Gastrocnemius medialis (tissue), 4 donors: ENCODE measurements at regions of chr1 and their contacts with region 1.

Region 1: DNA sequence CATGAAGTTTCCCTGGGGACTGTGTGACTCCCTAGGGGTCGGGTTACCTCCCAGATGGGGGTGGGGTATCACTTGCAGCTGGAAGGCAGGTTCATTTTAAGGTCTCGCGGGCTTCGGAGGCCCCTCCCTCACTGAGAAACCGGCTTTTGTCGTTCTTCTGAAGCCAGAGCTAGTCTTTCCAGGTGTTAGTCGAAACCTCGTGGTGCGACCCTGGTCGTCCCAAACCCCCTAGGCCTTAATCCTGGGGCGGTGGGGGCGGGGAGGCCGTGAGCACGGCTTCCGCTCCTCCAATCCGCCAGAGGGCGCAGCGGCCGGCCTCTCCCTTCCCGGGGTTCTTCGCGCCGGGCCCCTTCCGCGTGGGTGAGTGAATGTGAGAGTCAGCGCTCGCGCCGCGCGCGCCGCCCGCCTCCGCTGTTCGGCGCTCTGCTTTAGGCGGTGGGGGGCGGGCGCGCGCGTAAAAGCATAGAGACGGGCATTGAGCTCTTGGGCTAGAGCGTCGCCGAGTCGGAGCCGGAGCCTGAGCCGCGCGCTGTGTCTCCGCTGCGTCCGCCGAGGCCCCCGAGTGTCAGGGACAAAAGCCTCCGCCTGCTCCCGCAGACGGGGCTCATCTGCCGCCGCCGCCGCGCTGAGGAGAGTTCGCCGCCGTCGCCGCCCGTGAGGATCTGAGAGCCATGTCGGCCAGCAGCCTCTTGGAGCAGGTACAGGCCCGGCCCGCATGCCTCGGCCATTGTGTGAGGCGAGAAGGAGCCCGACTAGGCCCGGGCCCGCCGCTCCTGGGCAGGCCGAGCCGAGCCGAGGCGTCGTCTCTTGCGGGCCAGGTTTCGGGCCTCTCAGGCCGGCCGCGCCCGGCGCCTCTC is at the start of gene YTHDF2:
- DNase-seq: peak; percentile 92 to 96
- ATAC-seq: peak; percentile 91 to 95
- H3K4me3 ChIP-seq: peak within 1 kb of the TSS; percentile 82 to 94 (median 90)
- H3K27ac ChIP-seq: peak within 1 kb of the TSS; percentile 90 to 97 (median 96)
- H3K4me1 ChIP-seq: peaks cover 35 to 42% of the 10 kb centered on the region in 2 donors
- H3K27me3 ChIP-seq: no peaks in the 10 kb centered on the region
- CTCF ChIP-seq: peak; percentile 95 to 97 (median 96)
- POLR2A ChIP-seq: peak; percentile 94 to 95
- total RNA-seq, gene YTHDF2: 35.6 to 50.6 (median 47.0) TPM

Region 2: DNA sequence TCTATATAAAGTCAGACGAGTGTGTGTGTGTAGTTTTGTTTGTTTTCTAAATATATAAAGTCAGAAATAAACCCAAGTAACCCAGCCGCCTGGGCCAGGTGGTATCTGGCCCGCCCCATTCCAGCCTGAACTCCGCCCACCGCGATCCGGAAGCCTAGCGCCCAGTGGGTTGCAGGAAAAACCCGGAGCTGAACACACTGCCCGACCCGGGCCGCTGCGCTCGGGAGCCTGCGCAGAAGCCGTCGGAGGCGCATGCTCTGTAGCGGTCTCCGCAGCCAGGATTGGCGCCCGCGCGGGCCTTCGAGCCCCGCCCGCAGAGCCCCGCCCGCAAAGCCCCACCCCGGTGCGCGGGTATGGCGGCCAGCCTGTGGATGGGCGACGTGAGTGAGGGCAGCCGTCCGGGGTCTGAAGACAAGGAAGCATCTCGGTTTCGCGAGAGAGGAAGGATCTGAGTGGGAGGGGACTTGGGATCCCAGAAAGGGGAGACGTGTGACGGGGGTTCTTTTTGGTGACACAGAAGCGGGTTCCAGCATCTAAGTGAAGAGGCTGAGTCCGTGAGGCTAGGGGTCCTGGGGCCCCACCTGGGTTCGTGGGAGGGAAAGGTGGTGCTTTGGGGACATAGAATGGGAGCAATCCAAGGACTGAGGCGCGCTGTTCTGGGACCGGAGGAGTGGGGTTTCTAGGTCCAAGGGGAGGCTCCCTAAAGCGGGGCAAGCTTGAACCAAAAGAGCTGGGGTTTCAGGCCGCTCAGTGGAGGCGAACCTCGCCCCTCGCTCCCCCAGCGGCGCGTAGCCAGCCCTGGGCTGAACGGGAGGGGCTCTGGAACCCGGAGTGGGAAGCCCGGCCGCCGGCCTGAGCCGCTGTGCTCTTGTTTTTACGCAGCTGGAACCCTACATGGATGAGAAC is 183.7 kb before region 1 on chr1 and contains the start of gene TRNAU1AP:
- in situ Hi-C with region 1: no loop called
- intact Hi-C with region 1: loop called (anchors 1 kb)
- DNase-seq: peak; percentile 95 to 96
- ATAC-seq: peak; percentile 96
- H3K4me3 ChIP-seq: peak within 1 kb of the TSS; percentile 76 to 81 (median 80)
- H3K27ac ChIP-seq: peak within 1 kb of the TSS; percentile 86 to 93 (median 90)
- H3K4me1 ChIP-seq: peaks cover 8 to 14% of the 10 kb centered on the region in 2 donors
- H3K27me3 ChIP-seq: no peaks in the 10 kb centered on the region
- CTCF ChIP-seq: no peak
- POLR2A ChIP-seq: peak; percentile 80 to 87
- total RNA-seq, gene TRNAU1AP: 5.3 to 19.7 (median 12.0) TPM

Region 3: GRCh38 chr1:28565726-28566125 is 171.0 kb before region 1 on chr1:
- in situ Hi-C with region 1: no loop called
- intact Hi-C with region 1: no loop called
- DNase-seq: no peak
- ATAC-seq: no peak
- H3K4me3 ChIP-seq: no peak overlapping the region
- H3K27ac ChIP-seq: no peak overlapping the region
- H3K4me1 ChIP-seq: peaks cover 0 to 13% of the 10 kb centered on the region in 2 donors
- H3K27me3 ChIP-seq: no peaks in the 10 kb centered on the region
- CTCF ChIP-seq: no peak
- POLR2A ChIP-seq: no peak

Region 4: DNA sequence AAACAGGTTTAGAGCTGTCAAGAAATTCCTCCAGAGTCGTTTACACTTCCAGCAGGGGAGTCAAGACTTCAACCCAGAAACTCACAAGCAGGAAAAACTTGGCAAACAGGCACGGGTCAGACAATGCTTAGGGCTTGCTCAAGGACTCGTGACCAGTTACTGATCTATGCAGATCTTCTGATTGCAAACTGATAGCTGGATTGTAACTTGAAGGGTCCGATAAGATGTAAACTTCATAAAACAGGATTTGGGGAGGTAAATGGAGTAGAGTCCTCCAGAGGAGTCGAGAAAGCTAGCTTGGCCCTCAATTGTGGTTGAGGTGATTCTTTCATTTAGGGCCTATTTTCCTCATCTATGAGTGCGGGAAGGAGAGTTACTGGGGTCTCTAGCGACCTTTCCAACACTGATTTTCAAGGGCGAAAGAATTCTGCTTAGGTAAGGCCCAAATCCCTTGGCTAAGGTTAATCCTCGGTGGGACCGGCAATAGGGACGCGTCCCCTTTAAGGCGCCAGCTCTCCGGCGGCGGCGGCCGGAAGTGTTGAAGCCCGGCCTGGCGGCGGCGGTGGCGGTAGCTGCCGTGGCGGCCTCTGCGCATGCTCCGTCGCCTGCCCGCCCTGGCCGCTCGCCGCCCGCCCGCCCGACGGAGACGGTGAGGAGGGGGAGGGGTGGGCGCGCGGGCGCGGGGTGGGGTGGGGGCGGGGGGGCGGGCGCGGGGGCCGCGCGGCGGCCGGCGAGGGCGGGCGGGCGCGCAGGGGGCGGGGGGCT is 68.3 kb before region 1 on chr1 and contains the start of gene GMEB1:
- in situ Hi-C with region 1: no loop called
- intact Hi-C with region 1: loop called (anchors 2 kb)
- DNase-seq: peak; percentile 74 to 85
- ATAC-seq: peak; percentile 86 to 87
- H3K4me3 ChIP-seq: peak within 1 kb of the TSS; percentile 85 to 98 (median 96)
- H3K27ac ChIP-seq: peak within 1 kb of the TSS; percentile 99 to 100 (median 99)
- H3K4me1 ChIP-seq: peaks cover 10 to 20% of the 10 kb centered on the region in 2 donors
- H3K27me3 ChIP-seq: no peaks in the 10 kb centered on the region
- CTCF ChIP-seq: peak in 1 of 5 experiments; percentile 16
- POLR2A ChIP-seq: no peak
- total RNA-seq, gene GMEB1: 6.2 to 12.0 (median 9.2) TPM

Region 5: DNA sequence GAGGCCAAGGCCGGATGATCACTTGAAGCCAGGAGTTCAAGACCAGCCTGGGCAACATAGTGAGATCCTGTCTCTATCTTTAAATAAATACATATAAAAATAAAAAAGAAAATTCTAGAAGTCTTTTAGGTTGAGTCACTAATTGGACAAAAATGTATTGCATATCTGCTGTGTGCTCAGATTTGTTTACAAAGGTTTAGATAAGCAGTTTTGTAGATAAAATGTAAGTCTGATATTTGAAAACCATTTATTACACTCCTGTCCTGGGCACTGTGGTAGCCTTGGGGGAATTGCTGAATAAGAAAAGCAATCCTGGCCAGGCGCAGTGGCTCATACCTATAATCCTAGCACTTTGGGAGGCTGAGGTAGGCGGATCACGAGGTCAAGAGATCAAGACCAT is 56.5 kb before region 1 on chr1:
- in situ Hi-C with region 1: no loop called
- intact Hi-C with region 1: loop called (anchors 2 kb)
- DNase-seq: no peak
- ATAC-seq: no peak
- H3K4me3 ChIP-seq: no peak overlapping the region
- H3K27ac ChIP-seq: no peak overlapping the region
- H3K4me1 ChIP-seq: peaks cover 1 to 8% of the 10 kb centered on the region in 2 donors
- H3K27me3 ChIP-seq: no peaks in the 10 kb centered on the region
- CTCF ChIP-seq: no peak
- POLR2A ChIP-seq: no peak

Region 6: DNA sequence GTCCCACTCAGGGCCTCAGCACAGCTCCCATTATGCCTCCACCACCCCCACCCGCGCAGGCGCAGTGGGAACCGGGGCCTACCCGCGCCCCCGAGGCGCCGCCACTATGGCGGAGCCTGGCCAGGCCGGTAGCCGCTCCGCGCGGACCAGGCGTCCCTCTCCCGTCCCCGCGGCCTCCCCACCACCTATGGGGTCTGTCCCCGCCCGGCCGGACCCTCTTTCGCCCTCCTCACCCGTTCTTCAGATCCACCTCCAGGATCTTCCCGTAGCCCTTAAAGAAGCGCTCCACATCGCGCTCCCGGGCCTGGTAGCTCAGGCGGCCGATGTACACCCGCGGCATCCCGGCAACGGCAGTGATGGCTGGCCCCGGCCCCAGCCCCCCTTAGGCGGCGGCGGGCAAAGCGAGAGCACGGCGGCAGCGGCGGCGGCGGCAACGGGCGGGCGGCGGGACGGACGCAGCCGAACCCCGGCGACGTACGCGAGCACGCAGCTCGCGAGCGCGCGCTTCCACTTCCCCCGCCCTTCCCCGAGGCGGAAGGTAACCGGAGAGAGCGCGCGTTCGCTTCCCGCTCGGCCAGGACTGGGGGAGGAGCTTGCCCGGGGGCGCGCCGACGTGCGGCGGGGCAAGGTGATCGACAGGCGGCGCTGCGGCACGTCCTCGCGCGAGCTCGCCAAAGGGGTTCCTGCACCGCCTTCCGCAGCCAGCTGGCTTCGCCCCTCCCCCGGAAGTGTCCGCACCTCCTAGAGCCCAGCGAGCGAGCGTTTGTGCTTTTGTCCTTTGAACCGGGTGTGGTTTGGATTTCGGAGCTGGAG is 444.9 kb after region 1 on chr1 and contains the start of gene SRSF4:
- in situ Hi-C with region 1: no loop called
- intact Hi-C with region 1: loop called (anchors 1 kb)
- DNase-seq: peak; percentile 99
- ATAC-seq: peak; percentile 90 to 92
- H3K4me3 ChIP-seq: peak within 1 kb of the TSS; percentile 78 to 98 (median 82)
- H3K27ac ChIP-seq: peak within 1 kb of the TSS; percentile 94 to 100 (median 97)
- H3K4me1 ChIP-seq: peaks cover 40 to 48% of the 10 kb centered on the region in 2 donors
- H3K27me3 ChIP-seq: no peaks in the 10 kb centered on the region
- CTCF ChIP-seq: peak; percentile 57 to 81 (median 74)
- POLR2A ChIP-seq: peak; percentile 95 to 98
- total RNA-seq, gene SRSF4: 42.4 to 72.5 (median 65.4) TPM